HepG2 (cell line): ENCODE measurements at regions of chr19 and their contacts with region 1.

Region 1: DNA sequence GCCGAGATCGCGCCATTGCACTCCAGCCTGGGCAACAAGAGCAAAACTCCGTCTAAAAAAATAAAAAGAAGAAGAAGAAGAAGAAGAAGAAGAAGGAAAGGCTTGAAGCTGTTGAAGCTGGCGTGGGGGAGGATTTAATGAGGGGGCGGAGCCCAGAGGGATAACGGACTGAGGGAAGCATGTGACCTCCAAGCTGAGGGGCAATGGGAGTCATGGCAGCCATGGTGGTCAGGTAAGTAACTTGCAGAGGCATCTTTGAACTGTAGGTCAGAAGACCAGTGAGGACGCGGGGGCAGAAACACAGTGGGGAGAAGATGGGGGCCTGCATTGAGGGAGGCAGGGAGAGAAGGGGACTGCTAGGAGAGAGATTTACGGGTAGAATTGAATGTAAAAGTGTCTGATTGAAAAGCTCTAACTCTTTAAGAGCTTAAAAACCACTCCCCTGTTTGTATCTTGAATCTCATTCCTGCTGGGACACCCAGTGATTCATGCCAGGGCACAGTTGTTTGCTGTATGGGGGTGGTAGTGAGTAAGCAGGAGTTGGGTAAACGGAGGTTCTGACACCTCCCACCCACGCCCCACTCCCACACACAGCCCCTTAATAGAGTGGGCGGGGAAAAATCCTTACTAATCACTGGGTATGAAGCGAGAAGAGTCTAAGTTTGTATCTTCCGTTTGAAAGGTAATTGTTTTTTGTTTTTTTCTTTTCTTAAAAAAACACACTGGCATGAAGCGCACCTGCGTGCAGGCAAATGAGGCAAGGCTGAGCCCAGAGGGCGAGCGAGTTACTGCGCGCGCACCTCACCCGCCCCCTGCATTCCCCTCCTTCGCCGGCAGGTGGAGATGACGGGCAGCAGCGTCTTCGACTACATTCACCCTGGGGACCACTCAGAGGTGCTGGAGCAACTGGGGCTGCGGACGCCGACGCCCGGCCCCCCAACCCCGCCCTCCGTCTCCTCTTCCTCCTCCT is 13.0 kb downstream of the TMEM160 start:
- DNase-seq: peak; percentile 52
- ATAC-seq: peak; percentile 73
- H3K4me3 ChIP-seq: peak overlapping the region; percentile 14 to 65 (median 60); a peak in 5 of 6 replicates
- H3K27ac ChIP-seq: no peak overlapping the region
- H3K4me1 ChIP-seq: peaks cover 29% of the 10 kb centered on the region
- H3K27me3 ChIP-seq: no peaks in the 10 kb centered on the region
- CTCF ChIP-seq: peak; percentile 94
- EP300 ChIP-seq: no peak
- POLR2A ChIP-seq: peak in 1 of 2 experiments; percentile 35; a peak in 1 of 4 replicates
- RAD21 ChIP-seq: peak; percentile 71

Region 2: DNA sequence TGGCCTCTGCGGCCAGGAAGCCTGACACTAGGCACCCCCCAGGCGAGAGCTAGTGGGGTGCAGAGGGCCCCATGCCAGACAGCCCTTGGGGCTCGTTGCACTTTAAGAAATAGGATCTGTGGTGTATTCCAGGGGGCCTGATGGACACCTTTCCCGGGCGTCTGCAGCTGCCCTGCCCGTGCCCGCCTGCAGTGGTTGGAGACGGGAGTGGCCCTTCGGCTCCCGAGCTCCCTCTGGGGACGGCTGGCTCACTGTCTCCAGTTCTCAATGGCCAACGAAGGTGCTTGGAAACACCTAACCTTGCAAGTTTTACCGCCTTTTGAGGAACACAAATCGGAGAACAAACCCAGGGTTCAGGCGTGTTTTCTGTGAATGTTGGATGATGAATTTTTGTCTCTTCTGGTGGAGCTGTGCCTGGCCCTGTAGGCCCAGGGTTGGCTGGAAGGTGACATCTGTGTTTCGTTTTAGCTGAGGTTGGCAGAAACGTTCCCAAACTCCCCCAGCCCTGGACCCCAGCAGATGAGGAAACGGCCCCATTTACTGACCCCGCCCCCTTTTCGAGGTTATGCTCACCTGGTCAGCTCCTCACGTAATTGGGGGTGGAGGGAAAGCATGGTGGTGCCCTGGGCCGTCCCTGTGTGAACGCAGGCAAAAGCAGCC is 33.2 kb before region 1 on chr19:
- CTCF ChIA-PET with region 1: no interaction called
- POLR2A ChIA-PET with region 1: no interaction called
- in situ Hi-C with region 1: no loop called
- intact Hi-C with region 1: no loop called
- DNase-seq: no peak
- ATAC-seq: no peak
- H3K4me3 ChIP-seq: no peak overlapping the region
- H3K27ac ChIP-seq: no peak overlapping the region
- H3K4me1 ChIP-seq: peaks cover 28% of the 10 kb centered on the region
- H3K27me3 ChIP-seq: no peaks in the 10 kb centered on the region
- CTCF ChIP-seq: no peak
- EP300 ChIP-seq: no peak
- POLR2A ChIP-seq: 0 out of 4 replicates have a peak, but pooled peaks of 1 of the 2 experiments have one; percentile 1
- RAD21 ChIP-seq: no peak

Region 3: DNA sequence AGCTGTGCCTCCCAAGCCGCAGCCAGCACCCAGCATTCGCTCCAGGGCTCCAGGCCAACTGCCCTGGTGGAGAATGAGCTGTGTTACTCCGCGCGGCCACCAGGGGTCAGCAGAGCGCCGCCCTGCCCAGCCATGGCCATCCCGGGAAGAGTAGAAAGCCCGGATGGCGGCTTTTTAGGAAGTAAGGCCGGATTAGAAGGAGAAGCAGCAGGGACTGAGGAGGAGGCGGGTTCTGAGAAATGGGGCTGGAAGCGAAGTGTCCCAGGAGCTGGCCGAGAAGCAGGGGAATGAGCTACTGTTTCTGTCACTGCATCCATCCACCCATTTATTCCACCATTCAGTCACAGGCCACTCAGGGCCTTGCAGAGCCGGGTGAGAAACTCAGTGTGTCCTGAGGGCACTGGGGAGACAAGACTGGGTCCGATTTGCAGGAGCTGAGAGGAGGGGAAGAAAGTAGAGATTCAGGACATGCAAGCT is 22.3 kb before region 1 on chr19:
- CTCF ChIA-PET with region 1: interaction called, 20 read pairs
- POLR2A ChIA-PET with region 1: no interaction called
- in situ Hi-C with region 1: no loop called
- intact Hi-C with region 1: loop called (anchors 1 kb)
- DNase-seq: peak; percentile 56
- ATAC-seq: peak; percentile 92
- H3K4me3 ChIP-seq: peak overlapping the region in 1 of 3 experiments; percentile 56; a peak in 2 of 6 replicates
- H3K27ac ChIP-seq: no peak overlapping the region
- H3K4me1 ChIP-seq: peaks cover 21% of the 10 kb centered on the region
- H3K27me3 ChIP-seq: no peaks in the 10 kb centered on the region; a peak in 1 of 5 replicates
- CTCF ChIP-seq: peak; percentile 96
- EP300 ChIP-seq: no peak
- POLR2A ChIP-seq: no peak
- RAD21 ChIP-seq: peak; percentile 95

Region 4: DNA sequence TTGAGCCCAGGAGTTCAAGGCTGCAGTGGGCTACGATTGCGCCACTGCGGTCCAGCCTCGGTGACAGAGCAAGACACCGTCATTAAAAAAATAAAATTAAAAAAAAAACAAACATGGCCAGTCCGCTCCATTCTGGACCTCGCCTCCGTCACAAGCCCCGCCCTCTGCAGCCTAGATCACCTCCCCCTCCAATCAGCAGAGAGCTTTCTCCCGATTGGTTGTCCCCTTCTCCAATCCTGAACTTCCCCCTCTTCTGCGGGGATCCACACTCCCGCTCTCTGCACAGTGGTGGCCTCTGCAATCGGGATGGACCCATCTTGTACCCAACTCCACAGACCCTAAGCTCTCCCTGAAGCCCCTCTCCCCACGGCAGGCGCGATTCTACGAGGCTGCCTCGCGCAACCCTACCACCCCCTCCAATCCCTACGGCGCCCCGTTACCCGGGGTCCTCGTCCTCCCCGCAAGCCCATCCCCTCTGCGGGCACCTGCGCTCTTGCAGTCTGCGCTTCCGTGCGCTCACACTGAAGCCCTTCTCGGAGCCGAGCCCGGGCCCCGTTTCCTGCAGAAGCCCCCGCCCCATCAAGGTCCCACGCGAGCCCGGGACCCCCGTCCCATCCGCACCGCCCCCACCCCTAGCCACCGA is 12.5 kb after region 1 on chr19:
- CTCF ChIA-PET with region 1: no interaction called
- POLR2A ChIA-PET with region 1: interaction called, 13 read pairs
- in situ Hi-C with region 1: no loop called
- intact Hi-C with region 1: no loop called
- DNase-seq: peak; percentile 93
- ATAC-seq: peak; percentile 89
- H3K4me3 ChIP-seq: peak overlapping the region; percentile 68 to 81 (median 73); a peak in 5 of 6 replicates
- H3K27ac ChIP-seq: peak overlapping the region; percentile 66
- H3K4me1 ChIP-seq: peaks cover 15% of the 10 kb centered on the region
- H3K27me3 ChIP-seq: no peaks in the 10 kb centered on the region
- CTCF ChIP-seq: no peak
- EP300 ChIP-seq: no peak
- POLR2A ChIP-seq: peak; percentile 74 to 86
- RAD21 ChIP-seq: no peak